ENCODE measurements at regions of chr4 and their contacts with region 1.

Region 1: DNA sequence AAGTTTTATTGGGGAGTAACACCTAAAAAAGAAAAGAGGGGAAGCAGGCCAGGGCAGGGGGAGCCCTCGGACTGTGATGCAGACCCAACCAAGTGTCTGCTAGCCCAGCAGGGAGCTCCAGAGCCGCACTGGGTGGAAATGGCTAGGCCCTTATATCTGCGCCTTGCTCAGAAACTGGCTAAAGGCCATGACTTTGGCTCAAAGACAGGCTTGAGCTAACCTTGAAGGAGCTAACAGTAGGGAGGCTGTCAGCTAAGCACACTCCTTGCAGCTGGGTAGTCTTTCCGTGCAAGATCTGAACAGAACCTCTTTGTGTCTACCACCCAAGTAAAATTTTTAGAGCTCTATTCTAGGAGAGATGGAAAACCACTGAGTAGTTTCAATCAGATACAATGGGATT is 43.0 kb downstream of the SEPSECS start:
- DNase-seq: no peak
- ATAC-seq: peak; percentile 56
- H3K4me3 ChIP-seq: no peak overlapping the region
- H3K27ac ChIP-seq: no peak overlapping the region
- H3K4me1 ChIP-seq: no peaks in the 10 kb centered on the region; a peak in 2 of 5 replicates
- H3K27me3 ChIP-seq: peaks cover 6 to 18% of the 10 kb centered on the region in 2 experiments; a peak in 3 of 5 replicates
- CTCF ChIP-seq: peak in 1 of 3 experiments; percentile 30; a peak in 1 of 6 replicates
- EP300 ChIP-seq: no peak
- POLR2A ChIP-seq: no peak
- RAD21 ChIP-seq: peak in 1 of 2 experiments; percentile 4; a peak in 1 of 4 replicates

Region 2: DNA sequence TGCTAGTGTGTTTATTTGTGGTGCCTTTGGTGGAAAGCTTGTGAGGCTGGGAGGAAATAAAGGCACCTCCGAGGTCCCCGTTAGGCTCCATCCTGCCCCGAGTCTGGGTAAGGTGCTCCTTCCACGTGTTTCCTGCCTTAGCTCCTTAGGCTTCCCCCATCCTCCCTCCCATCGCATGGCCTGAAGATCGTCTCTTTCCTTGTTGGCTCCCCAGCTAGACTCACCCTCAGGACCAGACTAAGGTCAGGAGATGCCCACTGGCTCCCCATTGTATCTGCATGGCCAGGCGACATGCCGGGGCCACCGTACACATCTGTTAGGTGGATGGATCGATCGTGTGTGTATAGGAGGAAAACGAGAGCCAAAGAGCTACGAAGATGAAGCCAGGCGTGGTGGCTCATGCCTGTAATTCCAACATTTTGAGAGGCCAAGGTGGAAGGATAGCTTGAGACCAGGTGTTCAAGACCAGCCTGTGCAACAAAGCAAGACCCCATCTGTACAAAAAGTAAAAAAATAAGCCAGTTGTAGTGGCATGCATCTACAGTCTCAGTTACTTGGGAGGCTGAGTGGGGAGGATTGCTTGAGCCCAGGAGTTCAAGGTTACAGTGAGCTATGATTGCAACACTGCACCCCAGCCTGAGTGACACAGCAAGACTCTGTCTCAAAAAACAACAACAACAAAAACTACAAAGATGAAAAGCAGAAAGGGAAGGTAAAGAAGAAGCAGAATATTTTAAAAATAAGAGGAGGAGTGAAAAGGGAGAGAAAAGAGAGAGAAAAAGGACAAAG is 10.7 kb before region 1 on chr4:
- CTCF ChIA-PET with region 1: no interaction called
- POLR2A ChIA-PET with region 1: interaction called, 10 read pairs
- in situ Hi-C with region 1: no loop called
- intact Hi-C with region 1: no loop called
- DNase-seq: no peak
- ATAC-seq: no peak
- H3K4me3 ChIP-seq: no peak overlapping the region
- H3K27ac ChIP-seq: no peak overlapping the region
- H3K4me1 ChIP-seq: peaks cover 0 to 3% of the 10 kb centered on the region in 2 experiments; a peak in 1 of 5 replicates
- H3K27me3 ChIP-seq: peaks cover 24 to 60% of the 10 kb centered on the region in 2 experiments
- CTCF ChIP-seq: no peak
- EP300 ChIP-seq: no peak
- POLR2A ChIP-seq: no peak
- RAD21 ChIP-seq: no peak